Heart right ventricle (tissue), 16 donors: ENCODE measurements at regions of chr6 and their contacts with region 1.

Region 1: DNA sequence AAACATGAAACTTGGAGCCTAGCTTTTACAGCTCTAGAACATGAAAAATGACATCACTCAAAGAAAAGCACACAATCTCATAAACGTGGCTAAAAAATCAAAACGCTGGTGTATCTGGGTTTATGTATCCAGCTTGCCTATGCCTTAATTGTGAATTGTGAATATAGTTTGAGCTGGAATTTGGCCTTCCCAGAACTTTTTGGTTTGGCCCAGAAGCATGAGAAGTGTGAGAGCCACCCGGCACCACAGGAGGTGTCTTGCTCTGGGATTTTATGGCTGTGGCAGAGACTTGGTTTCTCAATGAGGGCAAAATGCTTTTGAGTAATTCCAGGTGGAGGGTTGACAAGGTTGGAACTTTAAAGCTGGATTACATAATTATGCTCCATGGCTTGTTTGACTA is 69.2 kb downstream of the TIAM2 start:
- DNase-seq: no peak
- ATAC-seq: no peak
- H3K4me3 ChIP-seq: no peak overlapping the region
- H3K27ac ChIP-seq: no peak overlapping the region
- H3K4me1 ChIP-seq: no peaks in the 10 kb centered on the region
- H3K27me3 ChIP-seq: no peaks in the 10 kb centered on the region
- CTCF ChIP-seq: no peak

Region 2: DNA sequence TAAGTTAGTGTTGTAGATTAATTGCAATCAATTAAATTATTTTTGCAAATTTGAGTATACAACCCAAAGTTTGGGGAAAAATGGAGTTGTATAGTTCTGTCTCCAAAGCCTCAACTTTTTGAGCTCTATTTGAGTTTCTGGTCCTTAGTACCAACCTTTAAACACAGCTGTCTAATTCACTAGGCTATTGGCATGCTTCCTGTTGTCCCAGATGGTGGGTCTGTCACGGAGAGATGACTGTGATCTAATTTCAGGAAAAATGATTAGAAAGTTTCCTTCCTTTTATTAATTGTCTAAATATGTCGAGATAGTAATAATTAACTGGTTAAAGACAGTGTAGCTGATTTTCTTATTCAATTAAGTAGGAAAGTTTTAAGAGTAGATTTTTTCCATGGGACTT is 221.5 kb before region 1 on chr6:
- intact Hi-C with region 1: no loop called
- DNase-seq: no peak
- ATAC-seq: peak in 1 of 8 donors; percentile 47
- H3K4me3 ChIP-seq: no peak overlapping the region
- H3K27ac ChIP-seq: peak overlapping the region in 1 of 10 donors; percentile 37
- H3K4me1 ChIP-seq: peaks cover 0 to 40% (median 21%) of the 10 kb centered on the region in 9 donors
- H3K27me3 ChIP-seq: no peaks in the 10 kb centered on the region
- CTCF ChIP-seq: no peak

Region 3: DNA sequence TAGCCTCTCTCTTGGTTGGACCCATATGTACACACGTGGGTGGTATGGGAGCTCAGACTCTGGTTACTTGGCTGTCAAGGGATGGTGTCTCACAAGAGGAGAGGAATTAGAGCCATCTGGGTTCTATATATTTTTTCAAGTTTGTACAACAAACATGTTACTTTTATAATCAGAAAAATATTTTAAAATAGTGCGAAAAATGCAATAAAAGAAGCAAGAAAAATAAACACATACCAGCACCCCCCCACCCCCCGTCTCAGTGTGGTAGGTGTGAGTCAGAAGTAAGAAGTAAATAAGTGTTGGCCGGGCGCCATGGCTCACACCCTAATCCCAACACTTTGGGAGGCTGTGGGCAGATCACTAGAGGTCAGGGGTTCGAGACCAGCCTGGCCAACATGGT is 71.3 kb before region 1 on chr6:
- intact Hi-C with region 1: loop called in 1 of 10 experiments (anchors 2 kb)
- DNase-seq: no peak
- ATAC-seq: no peak
- H3K4me3 ChIP-seq: no peak overlapping the region
- H3K27ac ChIP-seq: no peak overlapping the region
- H3K4me1 ChIP-seq: peaks cover 0 to 11% (median 7%) of the 10 kb centered on the region in 9 donors
- H3K27me3 ChIP-seq: peaks cover 0 to 41% (median 12%) of the 10 kb centered on the region in 7 donors
- CTCF ChIP-seq: no peak